ENCODE measurements at regions of chr3 and their contacts with region 1.

Region 1: GRCh38 chr3:42190701-42191462 is 75.1 kb downstream of the CCK start:
- DNase-seq: peak in 1 of 2 experiments; percentile 89
- H3K4me3 ChIP-seq: no peak overlapping the region
- H3K27ac ChIP-seq: no peak overlapping the region
- H3K4me1 ChIP-seq: peaks cover 0 to 3% (median 0%) of the 10 kb centered on the region in 4 experiments; a peak in 3 of 7 replicates
- H3K27me3 ChIP-seq: no peaks in the 10 kb centered on the region
- CTCF ChIP-seq: peak; percentile 61 to 88 (median 85)
- EP300 ChIP-seq: no peak
- POLR2A ChIP-seq: no peak
- RAD21 ChIP-seq: peak; percentile 78 to 83

Region 2: DNA sequence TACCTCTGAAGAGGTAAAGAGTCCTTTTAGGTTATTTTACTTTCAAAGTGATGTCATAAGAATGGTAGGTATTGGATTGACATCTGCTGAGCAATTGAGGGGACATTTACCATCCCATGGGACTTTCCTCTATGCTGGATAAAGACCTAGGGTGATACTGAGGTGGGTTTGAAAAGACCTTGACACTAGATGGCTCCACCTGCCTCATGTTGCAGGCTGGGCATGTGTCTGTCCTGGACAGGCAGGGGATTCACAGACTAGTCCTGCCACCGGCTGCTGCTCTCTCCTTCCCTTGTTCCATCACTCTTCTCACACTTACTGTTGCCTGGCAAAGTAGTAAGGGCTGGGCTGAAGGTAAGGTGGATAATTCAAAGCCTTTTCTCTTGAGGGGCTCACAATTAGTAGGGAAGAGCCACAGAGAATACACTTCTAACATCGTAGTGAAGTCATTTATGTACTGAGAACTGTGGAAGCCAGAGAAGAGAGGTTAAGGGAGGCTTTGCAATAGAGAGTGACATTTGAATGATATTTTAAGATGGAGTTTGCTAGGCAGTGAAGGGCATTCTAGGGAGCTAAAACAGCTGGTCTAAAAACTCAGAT is 72.0 kb before region 1 on chr3:
- CTCF ChIA-PET with region 1: interaction called, 249 read pairs
- POLR2A ChIA-PET with region 1: no interaction called
- DNase-seq: peak in 1 of 2 experiments; percentile 19
- H3K4me3 ChIP-seq: no peak overlapping the region
- H3K27ac ChIP-seq: no peak overlapping the region
- H3K4me1 ChIP-seq: peaks cover 2 to 5% (median 4%) of the 10 kb centered on the region in 4 experiments; a peak in 6 of 7 replicates
- H3K27me3 ChIP-seq: no peaks in the 10 kb centered on the region
- CTCF ChIP-seq: peak; percentile 74 to 83 (median 78)
- EP300 ChIP-seq: no peak
- POLR2A ChIP-seq: no peak
- RAD21 ChIP-seq: peak; percentile 82 to 86

Region 3: GRCh38 chr3:42159706-42160472 is 31.0 kb before region 1 on chr3:
- CTCF ChIA-PET with region 1: interaction called, 12 read pairs
- POLR2A ChIA-PET with region 1: no interaction called
- DNase-seq: peak; percentile 82
- H3K4me3 ChIP-seq: peak overlapping the region; percentile 31 to 62 (median 43)
- H3K27ac ChIP-seq: peak overlapping the region; percentile 42; the same call in 1 of the 2 replicates
- H3K4me1 ChIP-seq: peaks cover 0 to 6% (median 4%) of the 10 kb centered on the region in 4 experiments; a peak in 4 of 7 replicates
- H3K27me3 ChIP-seq: no peaks in the 10 kb centered on the region
- CTCF ChIP-seq: no peak
- EP300 ChIP-seq: peak in 1 of 2 experiments; percentile 96; a peak in 1 of 3 replicates
- POLR2A ChIP-seq: peak in 1 of 2 experiments; percentile 69; a peak in 2 of 3 replicates
- RAD21 ChIP-seq: no peak

Region 4: GRCh38 chr3:42179110-42179725 is 11.7 kb before region 1 on chr3:
- CTCF ChIA-PET with region 1: interaction called, 68 read pairs
- POLR2A ChIA-PET with region 1: no interaction called
- DNase-seq: peak in 1 of 2 experiments; percentile 54
- H3K4me3 ChIP-seq: no peak overlapping the region
- H3K27ac ChIP-seq: peak overlapping the region; percentile 45; the same call in 1 of the 2 replicates
- H3K4me1 ChIP-seq: peaks cover 0 to 13% (median 5%) of the 10 kb centered on the region in 4 experiments; a peak in 5 of 7 replicates
- H3K27me3 ChIP-seq: no peaks in the 10 kb centered on the region
- CTCF ChIP-seq: no peak
- EP300 ChIP-seq: no peak
- POLR2A ChIP-seq: no peak
- RAD21 ChIP-seq: no peak

Region 5: GRCh38 chr3:42214565-42215283 is 23.8 kb after region 1 on chr3:
- CTCF ChIA-PET with region 1: interaction called, 10 read pairs
- POLR2A ChIA-PET with region 1: no interaction called
- DNase-seq: no peak
- H3K4me3 ChIP-seq: no peak overlapping the region
- H3K27ac ChIP-seq: no peak overlapping the region
- H3K4me1 ChIP-seq: peaks cover 0 to 5% (median 2%) of the 10 kb centered on the region in 4 experiments; a peak in 2 of 7 replicates
- H3K27me3 ChIP-seq: no peaks in the 10 kb centered on the region
- CTCF ChIP-seq: no peak
- EP300 ChIP-seq: no peak
- POLR2A ChIP-seq: no peak
- RAD21 ChIP-seq: no peak